Calu3 (cell line): ENCODE measurements at regions of chr11 and their contacts with region 1.

Region 1: GRCh38 chr11:56841210-56841810 is 92.8 kb upstream of the OR9G4 start:
- DNase-seq: peak; percentile 67
- H3K4me3 Mint-ChIP-seq: no peak overlapping the region
- H3K27ac Mint-ChIP-seq: peak overlapping the region; percentile 87
- H3K4me1 Mint-ChIP-seq: peaks cover 33% of the 10 kb centered on the region
- H3K27me3 Mint-ChIP-seq: no peaks in the 10 kb centered on the region
- CTCF ChIP-seq: peak; percentile 65

Region 2: DNA sequence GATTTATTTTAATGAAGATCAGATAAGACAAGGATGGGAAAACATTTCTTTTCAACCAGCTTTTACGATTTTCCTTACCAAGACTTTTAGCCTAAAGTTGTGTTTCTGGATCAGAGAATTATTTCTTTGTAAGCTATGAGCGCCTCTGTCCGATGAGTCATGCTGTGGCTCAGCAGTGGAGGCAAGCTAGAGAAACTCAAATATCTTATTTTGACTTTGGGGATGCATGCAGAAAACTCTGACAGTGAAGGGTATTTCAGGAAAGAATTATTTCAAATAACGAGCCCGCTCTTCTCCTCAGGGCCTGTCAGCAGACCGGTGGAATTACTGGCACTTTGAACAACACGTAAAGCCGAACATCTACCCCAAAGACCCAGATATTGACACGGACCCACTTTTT is 69.5 kb after region 1 on chr11:
- CTCF ChIA-PET with region 1: interaction called, 16 read pairs
- intact Hi-C with region 1: loop called (anchors 1 kb)
- DNase-seq: peak; percentile 32
- H3K4me3 Mint-ChIP-seq: peak overlapping the region; percentile 57
- H3K27ac Mint-ChIP-seq: peak overlapping the region; percentile 97
- H3K4me1 Mint-ChIP-seq: peaks cover 37% of the 10 kb centered on the region
- H3K27me3 Mint-ChIP-seq: no peaks in the 10 kb centered on the region
- CTCF ChIP-seq: no peak

Region 3: DNA sequence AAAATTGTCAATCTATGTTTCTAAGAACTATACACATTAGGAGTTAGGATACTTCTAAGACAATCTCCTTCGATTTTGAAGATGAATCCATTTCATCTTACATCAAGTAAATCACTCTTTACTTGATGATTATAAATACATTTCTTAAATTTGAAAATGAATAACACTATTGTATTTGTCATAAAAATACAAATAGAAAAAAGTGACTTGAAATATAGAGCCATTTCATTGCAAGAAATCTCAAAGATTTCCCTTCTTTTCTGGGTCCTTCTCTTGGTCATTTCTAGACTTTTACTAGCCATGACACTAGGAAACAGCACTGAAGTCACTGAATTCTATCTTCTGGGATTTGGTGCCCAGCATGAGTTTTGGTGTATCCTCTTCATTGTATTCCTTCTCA is 147.3 kb after region 1 on chr11 and contains the start of gene OR5AK2:
- CTCF ChIA-PET with region 1: no interaction called
- intact Hi-C with region 1: loop called (anchors 10 kb)
- DNase-seq: no peak
- H3K4me3 Mint-ChIP-seq: no peak within 1 kb of the TSS
- H3K27ac Mint-ChIP-seq: no peak within 1 kb of the TSS
- H3K4me1 Mint-ChIP-seq: no peaks in the 10 kb centered on the region
- H3K27me3 Mint-ChIP-seq: no peaks in the 10 kb centered on the region
- CTCF ChIP-seq: no peak
- total RNA-seq, gene OR5AK2: not detected in 2 replicates

Region 4: DNA sequence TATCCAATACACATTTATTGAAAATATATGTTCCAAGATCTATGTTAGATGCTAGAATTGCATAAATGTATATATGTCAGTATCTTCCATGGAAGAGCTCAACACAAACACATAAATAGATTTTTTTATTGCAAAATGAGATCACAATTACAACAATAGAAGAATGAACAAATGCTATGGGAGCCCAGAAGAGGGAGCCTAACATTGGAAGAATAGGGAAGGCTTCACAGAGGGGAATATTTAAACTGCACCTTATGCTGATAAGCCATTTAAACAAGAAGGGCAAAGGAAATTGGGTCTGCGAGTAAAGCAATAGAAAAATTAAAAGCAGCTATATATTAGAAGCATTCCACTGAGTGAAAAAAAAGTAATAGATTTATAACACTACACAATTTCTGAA is 244.3 kb after region 1 on chr11:
- CTCF ChIA-PET with region 1: interaction called, 4 read pairs
- intact Hi-C with region 1: loop called (anchors 2 kb)
- DNase-seq: no peak
- H3K4me3 Mint-ChIP-seq: no peak overlapping the region
- H3K27ac Mint-ChIP-seq: no peak overlapping the region
- H3K4me1 Mint-ChIP-seq: peaks cover 8% of the 10 kb centered on the region
- H3K27me3 Mint-ChIP-seq: no peaks in the 10 kb centered on the region
- CTCF ChIP-seq: no peak

Region 5: DNA sequence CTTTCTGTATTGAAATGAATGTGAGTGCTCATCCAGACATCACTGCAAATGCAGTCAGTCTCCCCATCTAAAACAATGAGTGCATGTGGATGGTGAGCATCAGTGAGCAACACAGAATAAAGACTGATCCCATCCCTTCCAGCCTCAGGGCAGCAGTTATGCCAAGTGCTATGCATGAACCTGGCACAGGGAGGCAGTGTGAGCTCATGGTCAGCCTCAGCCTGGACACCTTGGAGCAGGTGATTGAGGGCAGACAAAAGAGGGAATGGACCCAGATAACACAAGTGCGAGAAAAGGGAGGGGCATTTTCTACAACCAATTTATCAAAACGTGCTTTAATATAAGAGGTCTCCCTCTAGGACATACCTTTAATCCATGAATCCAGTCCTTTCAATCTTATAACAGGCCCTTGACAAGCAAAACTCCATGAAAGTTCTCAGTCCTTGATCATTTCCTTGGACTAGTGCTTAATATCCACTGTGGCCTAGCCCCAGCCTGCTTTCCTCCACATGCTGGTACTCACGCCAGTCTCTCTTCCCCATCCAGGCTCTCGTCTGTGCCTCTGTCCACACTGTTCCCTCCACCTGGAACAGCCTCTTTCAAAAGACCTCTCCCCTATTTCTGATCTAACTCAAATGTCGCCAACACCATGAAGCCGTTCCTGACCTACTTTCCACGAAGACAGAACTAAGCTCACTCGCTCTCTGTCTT is 289.9 kb after region 1 on chr11:
- CTCF ChIA-PET with region 1: no interaction called
- intact Hi-C with region 1: loop called (anchors 1 kb)
- DNase-seq: peak; percentile 59
- H3K4me3 Mint-ChIP-seq: no peak overlapping the region
- H3K27ac Mint-ChIP-seq: no peak overlapping the region
- H3K4me1 Mint-ChIP-seq: peaks cover 19% of the 10 kb centered on the region
- H3K27me3 Mint-ChIP-seq: no peaks in the 10 kb centered on the region
- CTCF ChIP-seq: peak; percentile 65